CD4-positive, alpha-beta memory T cell (primary cell): ENCODE measurements at regions of chr2 and their contacts with region 1.

Region 1: GRCh38 chr2:53994818-53995808 is 24.3 kb upstream of the PSME4 start:
- DNase-seq: peak; percentile 41 to 84 (median 76)
- H3K4me3 ChIP-seq: peak overlapping the region in 1 of 2 donors; percentile 40
- H3K4me3 Mint-ChIP-seq: peak overlapping the region; percentile 67 to 85 (median 72)
- H3K27ac ChIP-seq: peak overlapping the region; percentile 20
- H3K27ac Mint-ChIP-seq: peak overlapping the region; percentile 76 to 94 (median 89)
- H3K4me1 ChIP-seq: peaks cover 46% of the 10 kb centered on the region
- H3K4me1 Mint-ChIP-seq: peaks cover 17 to 34% (median 25%) of the 10 kb centered on the region in 4 donors
- H3K27me3 ChIP-seq: no peaks in the 10 kb centered on the region
- H3K27me3 Mint-ChIP-seq: no peaks in the 10 kb centered on the region

Region 2: DNA sequence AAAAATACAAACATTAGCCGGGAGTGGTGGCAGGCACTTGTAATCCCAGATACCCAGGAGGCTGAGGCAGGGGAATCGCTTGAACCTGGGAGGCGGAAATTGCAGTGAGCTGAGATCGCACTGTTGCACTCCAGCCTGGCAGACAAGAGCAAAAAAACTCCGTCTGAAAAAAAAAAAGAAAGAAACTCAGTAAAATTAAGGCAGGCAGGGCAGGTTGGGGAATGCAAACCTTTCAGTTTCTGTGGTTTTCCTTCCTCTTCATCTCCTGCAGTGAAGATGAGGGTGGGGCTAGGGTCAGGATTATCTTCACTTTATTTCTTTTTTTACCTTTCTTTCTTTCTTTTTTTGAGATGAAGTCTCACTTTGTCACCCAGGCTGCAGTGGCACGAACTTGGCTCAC is 18.9 kb after region 1 on chr2:
- CTCF ChIA-PET with region 1: interaction called, 3 read pairs
- POLR2A ChIA-PET with region 1: interaction called, 4 read pairs
- intact Hi-C with region 1: loop called (anchors 2 kb)
- DNase-seq: peak in 4 of 5 donors; percentile 11 to 26 (median 15)
- H3K4me3 ChIP-seq: no peak overlapping the region
- H3K4me3 Mint-ChIP-seq: peak overlapping the region; percentile 67 to 85 (median 77)
- H3K27ac ChIP-seq: peak overlapping the region; percentile 39
- H3K27ac Mint-ChIP-seq: peak overlapping the region; percentile 84 to 97 (median 91)
- H3K4me1 ChIP-seq: peaks cover 25% of the 10 kb centered on the region
- H3K4me1 Mint-ChIP-seq: peaks cover 23 to 44% (median 30%) of the 10 kb centered on the region in 4 donors
- H3K27me3 ChIP-seq: no peaks in the 10 kb centered on the region
- H3K27me3 Mint-ChIP-seq: no peaks in the 10 kb centered on the region

Region 3: GRCh38 chr2:54052825-54053718 is 58.0 kb after region 1 on chr2:
- CTCF ChIA-PET with region 1: interaction called, 3 read pairs
- POLR2A ChIA-PET with region 1: interaction called, 3 read pairs
- intact Hi-C with region 1: loop called (anchors 10 kb)
- DNase-seq: no peak
- H3K4me3 ChIP-seq: no peak overlapping the region
- H3K4me3 Mint-ChIP-seq: peak overlapping the region in 3 of 8 donors; percentile 64 to 85 (median 74)
- H3K27ac ChIP-seq: peak overlapping the region; percentile 34
- H3K27ac Mint-ChIP-seq: peak overlapping the region; percentile 73 to 99 (median 88)
- H3K4me1 ChIP-seq: peaks cover 27% of the 10 kb centered on the region
- H3K4me1 Mint-ChIP-seq: peaks cover 22 to 34% (median 28%) of the 10 kb centered on the region in 4 donors
- H3K27me3 ChIP-seq: no peaks in the 10 kb centered on the region
- H3K27me3 Mint-ChIP-seq: no peaks in the 10 kb centered on the region

Region 4: GRCh38 chr2:54133056-54133455 is 137.9 kb after region 1 on chr2:
- CTCF ChIA-PET with region 1: no interaction called
- POLR2A ChIA-PET with region 1: no interaction called
- intact Hi-C with region 1: no loop called
- DNase-seq: no peak
- H3K4me3 ChIP-seq: no peak overlapping the region
- H3K4me3 Mint-ChIP-seq: no peak overlapping the region
- H3K27ac ChIP-seq: no peak overlapping the region
- H3K27ac Mint-ChIP-seq: peak overlapping the region in 1 of 7 donors; percentile 72
- H3K4me1 ChIP-seq: no peaks in the 10 kb centered on the region
- H3K4me1 Mint-ChIP-seq: no peaks in the 10 kb centered on the region
- H3K27me3 ChIP-seq: no peaks in the 10 kb centered on the region
- H3K27me3 Mint-ChIP-seq: no peaks in the 10 kb centered on the region